Sciatic nerve (tissue), 2 donors: ENCODE measurements at regions of chr19 and their contacts with region 1.

Region 1: GRCh38 chr19:13117772-13118423 is at the start of gene NACC1:
- DNase-seq: peak; percentile 91
- ATAC-seq: peak; percentile 95
- total RNA-seq, gene NACC1: 30.7 TPM

Region 2: DNA sequence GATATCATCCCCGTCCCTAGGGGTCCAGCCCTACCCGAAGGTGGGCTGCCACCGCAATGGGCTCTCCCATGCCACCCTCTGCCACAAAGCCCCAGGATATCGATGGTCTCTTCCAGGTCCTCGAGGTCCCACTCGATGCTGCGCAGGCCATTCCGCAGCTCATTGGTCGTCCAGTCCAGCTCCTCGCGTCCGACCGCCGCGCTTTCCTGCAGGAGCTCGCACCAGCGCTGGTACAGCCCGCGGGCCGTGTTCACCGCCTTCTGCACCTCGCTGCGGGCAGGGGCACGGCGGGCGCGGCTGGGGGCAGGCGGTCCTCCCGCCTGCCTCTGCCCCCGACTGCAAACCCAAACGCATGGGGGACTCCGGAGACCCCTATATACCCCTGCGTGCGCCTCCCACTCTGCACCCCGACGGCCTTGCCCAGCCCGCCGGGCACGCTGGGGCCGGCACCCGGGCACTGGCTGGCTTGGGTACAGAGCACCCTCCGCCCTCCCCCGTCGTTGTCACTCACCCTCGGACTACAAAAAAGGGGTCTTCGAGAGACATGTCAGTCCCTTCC is 31.8 kb after region 1 on chr19:
- intact Hi-C with region 1: loop called (anchors 2 kb)
- DNase-seq: peak; percentile 75
- ATAC-seq: peak; percentile 0